PC-9 (cell line): ENCODE measurements at regions of chr3 and their contacts with region 1.

Region 1: GRCh38 chr3:177777699-177778098 is 580.4 kb upstream of the TBL1XR1 start:
- DNase-seq: peak; percentile 28 to 44
- H3K4me3 ChIP-seq: no peak overlapping the region
- H3K27ac ChIP-seq: no peak overlapping the region
- H3K4me1 ChIP-seq: peaks cover 24% of the 10 kb centered on the region
- H3K27me3 ChIP-seq: no peaks in the 10 kb centered on the region
- CTCF ChIP-seq: peak; percentile 56

Region 2: GRCh38 chr3:177236704-177237103 is 541.0 kb before region 1 on chr3:
- CTCF ChIA-PET with region 1: no interaction called
- POLR2A ChIA-PET with region 1: interaction called, 17 read pairs
- intact Hi-C with region 1: no loop called
- DNase-seq: no peak
- H3K4me3 ChIP-seq: no peak overlapping the region
- H3K27ac ChIP-seq: no peak overlapping the region
- H3K4me1 ChIP-seq: no peaks in the 10 kb centered on the region
- H3K27me3 ChIP-seq: no peaks in the 10 kb centered on the region
- CTCF ChIP-seq: no peak

Region 3: DNA sequence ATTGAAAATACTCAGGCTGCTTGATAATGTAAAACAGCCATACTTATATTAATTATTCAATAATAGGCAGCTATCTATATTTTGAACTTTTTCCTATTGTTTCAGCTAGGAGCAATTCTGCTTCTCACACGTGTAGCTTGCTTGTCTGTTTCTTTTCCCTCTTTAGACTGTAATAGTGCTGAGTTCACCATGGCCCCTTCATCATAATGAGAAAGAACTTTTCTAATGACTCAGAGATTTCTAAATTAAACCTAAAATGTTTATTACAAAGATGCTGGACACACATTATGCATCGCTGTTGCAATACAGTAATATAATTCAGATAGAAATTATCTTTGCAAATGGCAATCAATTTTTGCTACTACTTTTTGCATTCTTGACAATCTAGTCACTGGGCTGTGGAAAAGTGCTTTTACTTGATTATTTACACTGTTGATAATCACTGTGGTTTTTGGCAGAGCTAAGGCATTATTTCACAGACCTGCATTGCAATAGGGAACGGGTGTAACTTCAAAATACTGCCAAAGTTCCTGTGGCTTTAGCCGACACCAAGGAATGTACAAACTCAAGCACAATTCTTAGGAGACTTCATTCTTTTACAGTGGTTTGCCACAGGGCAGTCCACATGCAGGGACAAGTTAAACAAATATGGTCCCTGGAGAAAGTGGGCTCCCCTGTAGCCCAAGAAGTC is 299.4 kb before region 1 on chr3:
- CTCF ChIA-PET with region 1: no interaction called
- POLR2A ChIA-PET with region 1: no interaction called
- intact Hi-C with region 1: loop called (anchors 1 kb)
- DNase-seq: peak; percentile 84 to 100
- H3K4me3 ChIP-seq: no peak overlapping the region
- H3K27ac ChIP-seq: peak overlapping the region; percentile 85
- H3K4me1 ChIP-seq: peaks cover 33% of the 10 kb centered on the region
- H3K27me3 ChIP-seq: no peaks in the 10 kb centered on the region
- CTCF ChIP-seq: no peak

Region 4: DNA sequence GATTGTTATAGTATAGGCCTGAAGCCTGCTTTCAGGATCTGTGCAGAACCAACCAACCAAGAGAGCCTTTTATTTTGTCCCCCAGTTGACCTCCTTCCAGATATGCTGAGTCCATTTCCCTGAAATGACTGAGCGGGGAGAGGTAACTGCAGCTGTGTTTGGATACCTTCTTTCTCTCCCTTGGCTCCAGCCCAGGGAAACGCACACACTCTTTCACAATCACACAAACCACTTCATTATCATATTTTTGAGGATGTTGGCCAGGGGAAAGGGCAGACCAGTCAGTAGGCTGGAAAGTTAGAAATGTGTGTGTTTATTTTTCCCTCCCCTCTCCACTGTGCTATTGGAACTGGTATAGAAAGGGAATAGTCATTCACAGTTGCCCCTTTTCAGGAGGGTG is 162.7 kb before region 1 on chr3:
- CTCF ChIA-PET with region 1: no interaction called
- POLR2A ChIA-PET with region 1: no interaction called
- intact Hi-C with region 1: loop called (anchors 2 kb)
- DNase-seq: peak; percentile 84 to 96
- H3K4me3 ChIP-seq: no peak overlapping the region
- H3K27ac ChIP-seq: peak overlapping the region; percentile 62
- H3K4me1 ChIP-seq: peaks cover 87% of the 10 kb centered on the region
- H3K27me3 ChIP-seq: no peaks in the 10 kb centered on the region
- CTCF ChIP-seq: no peak

Region 5: DNA sequence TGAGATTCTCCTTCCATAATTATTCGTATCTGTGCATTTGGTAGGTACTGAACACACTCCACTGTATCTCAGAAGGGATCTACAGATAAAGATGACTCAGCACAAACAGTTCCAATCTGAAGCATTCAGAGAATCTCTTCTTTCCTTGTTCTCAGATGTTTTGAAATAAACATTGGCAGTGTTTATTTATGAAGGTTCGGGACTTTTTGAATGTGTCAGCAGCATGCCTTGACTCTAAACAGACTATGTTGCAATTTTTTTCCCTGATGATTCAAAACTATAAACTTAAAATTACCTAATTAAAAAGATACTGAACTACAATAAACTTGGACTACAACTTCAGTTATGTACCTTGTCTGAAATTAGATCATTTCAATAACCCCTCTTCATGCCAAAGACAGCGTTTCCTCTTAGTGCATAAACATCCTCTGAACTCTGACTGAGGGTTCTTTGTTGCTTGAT is 32.5 kb after region 1 on chr3:
- CTCF ChIA-PET with region 1: interaction called, 4 read pairs
- POLR2A ChIA-PET with region 1: interaction called, 5 read pairs
- intact Hi-C with region 1: loop called (anchors 1 kb)
- DNase-seq: peak in 1 of 2 experiments; percentile 99
- H3K4me3 ChIP-seq: no peak overlapping the region
- H3K27ac ChIP-seq: peak overlapping the region; percentile 82
- H3K4me1 ChIP-seq: peaks cover 34% of the 10 kb centered on the region
- H3K27me3 ChIP-seq: no peaks in the 10 kb centered on the region
- CTCF ChIP-seq: no peak

Region 6: DNA sequence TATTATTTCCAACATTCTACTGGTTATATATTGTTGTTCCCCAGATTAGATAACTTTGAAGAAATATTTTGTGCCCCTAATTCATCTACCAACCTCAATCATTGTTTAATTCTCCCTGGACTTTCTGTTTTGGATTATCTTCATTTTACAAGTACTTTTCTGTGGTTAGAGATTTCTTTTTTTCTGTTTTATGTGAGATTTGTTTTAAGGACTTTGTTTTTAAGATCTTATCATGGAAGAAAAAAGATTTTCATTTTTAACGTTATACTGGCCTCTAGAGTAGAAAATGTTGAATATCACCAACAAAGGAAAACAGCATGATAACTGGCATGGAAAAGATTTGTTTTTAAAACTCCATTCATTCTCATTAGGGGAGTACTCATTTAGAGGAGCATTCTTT is 547.6 kb after region 1 on chr3:
- CTCF ChIA-PET with region 1: no interaction called
- POLR2A ChIA-PET with region 1: no interaction called
- intact Hi-C with region 1: loop called (anchors 5 kb)
- DNase-seq: no peak
- H3K4me3 ChIP-seq: no peak overlapping the region
- H3K27ac ChIP-seq: no peak overlapping the region
- H3K4me1 ChIP-seq: peaks cover 13% of the 10 kb centered on the region
- H3K27me3 ChIP-seq: no peaks in the 10 kb centered on the region
- CTCF ChIP-seq: peak; percentile 72